Breast epithelium (tissue), 4 donors: ENCODE measurements at regions of chr14 and their contacts with region 1.

Region 1: DNA sequence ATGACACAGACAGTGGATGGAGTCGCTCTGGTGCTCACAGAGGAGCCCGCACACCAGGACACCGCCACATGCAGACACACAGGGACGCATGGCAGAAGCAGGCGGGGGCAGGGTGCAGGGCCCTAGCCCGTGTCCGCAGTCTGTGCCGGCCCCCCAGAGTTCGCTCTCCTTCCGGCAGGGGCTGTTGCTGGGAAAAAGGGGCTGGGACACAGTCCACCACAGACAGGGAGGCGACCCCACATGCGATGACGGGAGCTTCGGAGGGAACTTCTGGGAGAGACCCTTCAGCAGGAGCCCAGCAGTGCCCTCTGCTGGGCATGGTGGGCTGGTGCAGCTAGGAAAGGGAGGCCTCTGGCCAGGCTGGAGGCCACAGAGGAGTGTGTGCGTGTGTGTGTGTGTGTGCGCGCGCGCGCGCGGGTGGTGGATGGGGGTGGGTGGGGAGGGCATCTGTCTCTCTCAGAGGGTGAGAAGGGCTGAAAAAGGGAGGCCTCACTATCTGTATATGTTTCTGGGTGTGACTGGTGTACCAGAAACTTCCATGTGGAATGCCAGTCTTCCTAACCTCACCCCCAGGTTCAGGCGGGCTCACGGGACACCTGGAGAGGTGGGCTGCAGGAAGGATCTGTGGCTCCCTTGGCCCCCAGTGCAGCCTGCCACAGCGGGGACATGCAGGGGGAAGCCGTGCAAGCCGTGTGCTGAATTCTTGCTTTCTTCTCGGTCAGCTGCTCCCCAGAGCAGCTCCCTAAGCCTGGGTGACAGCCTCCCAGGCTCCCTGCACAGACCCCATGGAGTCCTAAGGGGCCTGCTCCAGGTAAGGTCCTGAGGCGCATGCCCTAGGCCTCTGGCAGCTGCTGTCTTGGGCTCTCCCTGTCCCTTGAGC is 60.7 kb downstream of the PLEKHG3 start:
- DNase-seq: peak in 1 of 2 donors; percentile 52
- H3K4me3 ChIP-seq: peak overlapping the region; percentile 14 to 39 (median 30)
- H3K27ac ChIP-seq: peak overlapping the region in 1 of 2 donors; percentile 20
- H3K4me1 ChIP-seq: peaks cover 0 to 11% of the 10 kb centered on the region in 2 donors
- H3K27me3 ChIP-seq: no peaks in the 10 kb centered on the region
- CTCF ChIP-seq: peak; percentile 52 to 81 (median 80)
- POLR2A ChIP-seq: no peak

Region 2: GRCh38 chr14:64671591-64671990 is 93.3 kb before region 1 on chr14:
- intact Hi-C with region 1: loop called (anchors 5 kb)
- DNase-seq: no peak
- H3K4me3 ChIP-seq: no peak overlapping the region
- H3K27ac ChIP-seq: no peak overlapping the region
- H3K4me1 ChIP-seq: no peaks in the 10 kb centered on the region
- H3K27me3 ChIP-seq: no peaks in the 10 kb centered on the region
- CTCF ChIP-seq: peak; percentile 66 to 91 (median 81)
- POLR2A ChIP-seq: no peak

Region 3: GRCh38 chr14:64717870-64718269 is 47.0 kb before region 1 on chr14:
- intact Hi-C with region 1: loop called (anchors 1 kb)
- DNase-seq: peak; percentile 76 to 82
- H3K4me3 ChIP-seq: no peak overlapping the region
- H3K27ac ChIP-seq: peak overlapping the region; percentile 89 to 93
- H3K4me1 ChIP-seq: peaks cover 6 to 40% of the 10 kb centered on the region in 2 donors
- H3K27me3 ChIP-seq: no peaks in the 10 kb centered on the region
- CTCF ChIP-seq: no peak
- POLR2A ChIP-seq: no peak

Region 4: DNA sequence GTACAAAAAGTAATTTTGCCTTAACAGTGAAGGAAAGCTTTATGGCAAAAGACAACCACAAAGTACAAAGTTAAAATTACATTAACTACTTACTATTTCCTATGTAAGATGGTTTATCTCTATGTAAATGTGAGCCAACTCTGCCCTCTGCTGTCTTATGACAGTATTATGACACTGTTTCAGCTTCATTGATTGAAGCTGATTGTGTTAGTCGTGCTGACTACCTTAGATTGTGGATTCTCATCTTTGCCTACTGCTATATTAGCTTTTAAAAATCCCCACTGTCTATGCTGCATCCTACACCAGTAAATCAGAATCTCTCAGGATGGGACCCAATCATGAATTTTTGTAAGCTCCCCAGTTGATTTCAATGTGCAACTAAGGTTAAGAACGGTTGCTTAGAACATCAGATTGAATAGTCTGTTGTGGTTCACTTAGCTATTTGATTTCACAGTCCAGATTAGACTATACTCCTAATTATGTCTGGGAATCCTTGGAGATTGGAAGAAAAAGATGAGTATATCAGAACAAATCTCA is 127.0 kb after region 1 on chr14:
- intact Hi-C with region 1: loop called (anchors 5 kb)
- DNase-seq: no peak
- H3K4me3 ChIP-seq: no peak overlapping the region
- H3K27ac ChIP-seq: no peak overlapping the region
- H3K4me1 ChIP-seq: no peaks in the 10 kb centered on the region
- H3K27me3 ChIP-seq: no peaks in the 10 kb centered on the region
- CTCF ChIP-seq: peak in 2 of 3 donors; percentile 61 to 65
- POLR2A ChIP-seq: no peak